ENCODE measurements at regions of chr1 and their contacts with region 1.

Region 1: GRCh38 chr1:209405183-209405814 is 178.2 kb upstream of the CAMK1G start:
- DNase-seq: no peak
- H3K4me3 ChIP-seq: peak overlapping the region in 1 of 4 experiments; percentile 36; a peak in 1 of 8 replicates
- H3K27ac ChIP-seq: no peak overlapping the region
- H3K4me1 ChIP-seq: peaks cover 5 to 18% (median 15%) of the 10 kb centered on the region in 4 experiments; a peak in 6 of 7 replicates
- H3K27me3 ChIP-seq: no peaks in the 10 kb centered on the region
- CTCF ChIP-seq: no peak
- EP300 ChIP-seq: no peak
- POLR2A ChIP-seq: no peak
- RAD21 ChIP-seq: no peak

Region 2: DNA sequence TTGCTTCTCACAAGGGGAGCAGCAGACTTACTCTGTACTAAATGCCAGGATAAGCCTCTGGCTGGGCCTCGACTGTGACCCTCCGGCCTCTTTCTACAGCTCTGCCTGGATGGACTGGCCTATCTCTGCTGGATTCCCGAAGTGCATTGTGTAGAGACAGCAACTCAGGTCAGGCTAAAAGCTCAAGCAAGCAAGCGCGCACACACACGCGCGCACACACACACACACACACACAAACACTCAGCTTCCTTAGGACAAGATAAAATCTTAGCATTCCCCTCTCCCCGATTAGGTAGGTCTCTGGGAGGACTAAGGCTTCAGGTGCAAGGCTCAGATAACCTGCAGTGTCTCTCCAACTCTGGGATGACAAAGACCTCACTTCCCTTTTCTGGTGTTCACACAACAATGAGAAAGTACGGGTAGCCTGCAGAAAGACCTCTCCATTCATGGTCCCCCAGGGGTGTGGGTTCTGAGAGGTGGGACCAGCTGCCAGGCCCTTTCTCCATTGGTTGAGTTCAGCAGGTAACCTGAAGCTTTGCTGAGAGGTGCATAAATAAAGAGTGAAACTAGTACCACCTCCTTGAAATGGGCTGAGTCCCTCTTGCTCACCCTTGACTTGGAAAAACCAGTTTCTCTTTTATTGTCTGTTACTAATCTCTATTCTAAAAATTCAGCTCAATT is 23.1 kb after region 1 on chr1:
- CTCF ChIA-PET with region 1: interaction called, 17 read pairs
- POLR2A ChIA-PET with region 1: no interaction called
- DNase-seq: peak in 1 of 2 experiments; percentile 62
- H3K4me3 ChIP-seq: peak overlapping the region in 2 of 4 experiments; percentile 11 to 49; a peak in 4 of 8 replicates
- H3K27ac ChIP-seq: peak overlapping the region; percentile 58
- H3K4me1 ChIP-seq: peaks cover 8 to 33% (median 32%) of the 10 kb centered on the region in 4 experiments
- H3K27me3 ChIP-seq: no peaks in the 10 kb centered on the region
- CTCF ChIP-seq: no peak
- EP300 ChIP-seq: no peak
- POLR2A ChIP-seq: peak in 1 of 2 experiments; percentile 57; a peak in 2 of 3 replicates
- RAD21 ChIP-seq: no peak